ENCODE measurements at regions of chr10 and their contacts with region 1.

Region 1: DNA sequence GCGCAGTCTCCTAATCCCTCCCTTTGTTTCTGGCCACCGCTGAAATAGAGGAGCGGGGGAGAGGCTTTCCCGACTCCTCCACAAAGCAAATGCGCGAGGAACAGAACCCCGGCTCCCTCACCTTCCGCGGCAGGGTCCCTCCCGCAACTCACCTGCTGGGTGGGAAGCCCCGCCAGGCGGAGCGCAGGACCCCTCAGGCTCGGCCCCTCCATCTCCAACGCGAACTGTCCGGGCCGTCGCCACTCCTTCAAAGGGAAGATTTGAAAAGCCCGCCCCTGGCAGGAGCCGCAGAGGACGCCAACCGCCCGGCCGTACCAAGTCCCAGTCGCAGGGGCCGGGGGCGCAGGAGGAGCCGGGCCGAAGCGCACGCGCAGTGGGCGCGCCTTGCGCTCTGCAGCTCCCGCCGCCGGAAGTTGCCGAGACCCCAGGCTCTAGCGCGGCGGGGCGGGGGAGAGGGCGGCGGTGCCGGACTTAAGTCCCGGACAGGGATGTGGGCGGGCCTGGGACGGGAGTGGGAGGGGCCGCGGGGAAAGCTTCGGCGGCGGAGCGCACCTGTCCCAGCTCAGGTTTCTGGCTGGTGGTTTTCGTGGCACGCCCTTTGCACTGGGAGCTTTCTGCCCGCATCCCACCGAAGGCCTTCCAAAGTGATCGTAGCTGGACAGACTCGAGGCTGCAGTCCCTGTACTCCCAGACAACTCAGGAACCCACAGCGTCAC is at the start of gene RTKN2:
- DNase-seq: peak; percentile 85
- H3K4me3 ChIP-seq: peak within 1 kb of the TSS; percentile 53 to 73 (median 72)
- H3K27ac ChIP-seq: no peak within 1 kb of the TSS
- H3K4me1 ChIP-seq: peaks cover 11% of the 10 kb centered on the region
- H3K27me3 ChIP-seq: peaks cover 0 to 2% of the 10 kb centered on the region in 2 experiments
- CTCF ChIP-seq: no peak
- POLR2A ChIP-seq: no peak
- total RNA-seq, gene RTKN2: 4.8 and 5.5 TPM in 2 replicates

Region 2: GRCh38 chr10:62250594-62251198 is 17.9 kb before region 1 on chr10:
- CTCF ChIA-PET with region 1: interaction called, 17 read pairs
- POLR2A ChIA-PET with region 1: no interaction called
- dilution Hi-C with region 1: no loop called
- intact Hi-C with region 1: loop called (anchors 1 kb)
- DNase-seq: peak; percentile 19
- H3K4me3 ChIP-seq: no peak overlapping the region
- H3K27ac ChIP-seq: no peak overlapping the region
- H3K4me1 ChIP-seq: peaks cover 3% of the 10 kb centered on the region
- H3K27me3 ChIP-seq: no peaks in the 10 kb centered on the region
- CTCF ChIP-seq: no peak
- POLR2A ChIP-seq: no peak

Region 3: GRCh38 chr10:62306663-62307062 is 38.1 kb after region 1 on chr10:
- CTCF ChIA-PET with region 1: no interaction called
- POLR2A ChIA-PET with region 1: no interaction called
- dilution Hi-C with region 1: no loop called
- intact Hi-C with region 1: no loop called
- DNase-seq: no peak
- H3K4me3 ChIP-seq: no peak overlapping the region
- H3K27ac ChIP-seq: no peak overlapping the region
- H3K4me1 ChIP-seq: no peaks in the 10 kb centered on the region
- H3K27me3 ChIP-seq: peaks cover 0 to 3% of the 10 kb centered on the region in 2 experiments
- CTCF ChIP-seq: no peak
- POLR2A ChIP-seq: no peak

Region 4: GRCh38 chr10:62384057-62384446 is 115.5 kb after region 1 on chr10:
- CTCF ChIA-PET with region 1: interaction called, 5 read pairs
- POLR2A ChIA-PET with region 1: no interaction called
- dilution Hi-C with region 1: no loop called
- intact Hi-C with region 1: loop called (anchors 2 kb)
- DNase-seq: peak; percentile 31
- H3K4me3 ChIP-seq: peak overlapping the region in 1 of 3 experiments; percentile 48
- H3K27ac ChIP-seq: peak overlapping the region; percentile 95
- H3K4me1 ChIP-seq: peaks cover 53% of the 10 kb centered on the region
- H3K27me3 ChIP-seq: no peaks in the 10 kb centered on the region
- CTCF ChIP-seq: no peak
- POLR2A ChIP-seq: no peak

Region 5: GRCh38 chr10:62422068-62422590 is 153.6 kb after region 1 on chr10:
- CTCF ChIA-PET with region 1: interaction called, 40 read pairs
- POLR2A ChIA-PET with region 1: no interaction called
- dilution Hi-C with region 1: no loop called
- intact Hi-C with region 1: loop called (anchors 2 kb)
- DNase-seq: no peak
- H3K4me3 ChIP-seq: no peak overlapping the region
- H3K27ac ChIP-seq: no peak overlapping the region
- H3K4me1 ChIP-seq: no peaks in the 10 kb centered on the region
- H3K27me3 ChIP-seq: no peaks in the 10 kb centered on the region
- CTCF ChIP-seq: no peak
- POLR2A ChIP-seq: no peak

Region 6: DNA sequence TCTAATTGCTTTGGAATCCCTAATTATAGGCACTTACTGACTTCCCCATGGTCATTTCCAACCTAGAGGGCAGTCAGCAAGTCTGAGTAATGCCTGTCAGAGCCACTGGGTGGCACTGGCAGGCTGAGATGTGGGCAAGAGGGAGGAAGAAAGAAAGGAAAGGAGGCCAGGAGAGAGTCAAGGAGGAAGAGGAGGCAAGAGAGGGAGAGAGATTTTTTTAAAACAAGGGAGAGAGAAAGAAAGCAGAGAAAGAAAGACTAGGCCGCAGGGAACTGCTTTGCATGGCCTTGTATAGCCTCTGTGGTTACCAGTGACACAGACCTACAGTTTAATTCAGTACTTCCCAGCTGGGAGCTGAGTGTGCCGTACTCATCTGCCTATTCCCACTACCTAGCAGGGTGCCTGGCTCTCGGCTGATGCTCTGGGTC is 325.6 kb after region 1 on chr10:
- CTCF ChIA-PET with region 1: interaction called, 3 read pairs
- POLR2A ChIA-PET with region 1: no interaction called
- dilution Hi-C with region 1: no loop called
- intact Hi-C with region 1: loop called (anchors 5 kb)
- DNase-seq: peak; percentile 51
- H3K4me3 ChIP-seq: no peak overlapping the region
- H3K27ac ChIP-seq: no peak overlapping the region
- H3K4me1 ChIP-seq: peaks cover 7% of the 10 kb centered on the region
- H3K27me3 ChIP-seq: peaks cover 0 to 2% of the 10 kb centered on the region in 2 experiments
- CTCF ChIP-seq: peak; percentile 74 to 81
- POLR2A ChIP-seq: no peak